Upper lobe of right lung (tissue), 1 donor: ENCODE measurements at regions of chr2 and their contacts with region 1.

Region 1: DNA sequence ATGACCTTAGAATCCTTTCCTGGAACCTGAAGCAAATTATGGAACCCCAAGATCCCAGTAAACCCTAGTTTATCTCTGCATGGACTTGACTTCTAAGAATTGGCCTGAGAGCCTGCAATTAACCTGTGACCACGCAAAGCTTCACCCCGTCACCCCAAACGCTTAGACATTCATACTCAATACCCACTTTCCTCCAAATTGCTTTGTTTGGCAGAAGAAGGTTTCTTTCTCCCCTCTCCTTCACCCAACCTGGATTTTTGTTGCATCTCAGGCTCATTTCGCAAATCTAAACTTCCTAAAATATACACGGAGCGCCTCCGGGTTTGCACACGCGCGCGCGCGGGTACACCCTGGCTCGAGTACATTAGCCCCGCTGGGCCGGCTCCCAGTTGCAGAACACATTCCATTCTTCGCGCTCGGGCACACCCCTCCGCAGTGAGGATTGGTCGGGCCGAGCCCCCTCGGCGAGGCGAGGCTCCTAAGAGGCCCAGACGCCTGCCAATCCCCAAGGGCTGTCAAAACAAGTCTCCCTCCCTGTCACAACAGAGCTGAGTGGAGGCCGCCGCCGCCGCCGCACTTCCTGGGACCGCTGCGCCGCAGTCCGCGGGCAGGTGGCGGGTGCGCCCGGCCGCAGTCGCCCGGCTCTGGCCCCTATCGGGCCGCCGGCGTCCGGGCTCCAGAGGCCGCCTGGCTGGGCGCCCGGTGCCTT is at the start of gene PLCL1:
- DNase-seq: peak; percentile 96
- ATAC-seq: peak; percentile 98
- H3K4me3 ChIP-seq: peak within 1 kb of the TSS; percentile 76
- H3K27ac ChIP-seq: peak within 1 kb of the TSS; percentile 53
- H3K4me1 ChIP-seq: peaks cover 22% of the 10 kb centered on the region
- H3K27me3 ChIP-seq: no peaks in the 10 kb centered on the region
- CTCF ChIP-seq: no peak
- total RNA-seq, gene PLCL1: 7.7 TPM

Region 2: DNA sequence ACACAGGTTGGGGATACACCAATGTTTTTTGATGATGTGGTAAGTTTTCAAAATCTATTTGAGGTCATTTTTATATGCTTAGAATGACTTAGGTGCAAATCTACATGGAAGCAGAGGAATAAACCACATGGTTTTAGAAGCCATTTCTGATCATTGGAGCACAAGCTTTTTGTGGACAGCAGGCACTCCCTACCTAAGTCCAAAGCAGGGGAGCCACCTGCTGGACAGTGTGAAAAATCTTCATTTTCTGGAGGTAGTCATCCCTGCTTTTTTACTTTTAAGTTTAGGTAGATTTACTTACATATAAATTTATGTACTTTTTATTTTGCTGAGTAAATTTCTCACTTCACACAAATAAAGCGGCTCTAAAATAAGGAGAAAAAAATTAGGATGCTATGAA is 323.4 kb after region 1 on chr2:
- intact Hi-C with region 1: loop called (anchors 5 kb)
- DNase-seq: no peak
- ATAC-seq: peak; percentile 82
- H3K4me3 ChIP-seq: no peak overlapping the region
- H3K27ac ChIP-seq: no peak overlapping the region
- H3K4me1 ChIP-seq: no peaks in the 10 kb centered on the region
- H3K27me3 ChIP-seq: no peaks in the 10 kb centered on the region
- CTCF ChIP-seq: peak; percentile 67